SK-MEL-5 (cell line): ENCODE measurements at regions of chr14 and their contacts with region 1.

Region 1: DNA sequence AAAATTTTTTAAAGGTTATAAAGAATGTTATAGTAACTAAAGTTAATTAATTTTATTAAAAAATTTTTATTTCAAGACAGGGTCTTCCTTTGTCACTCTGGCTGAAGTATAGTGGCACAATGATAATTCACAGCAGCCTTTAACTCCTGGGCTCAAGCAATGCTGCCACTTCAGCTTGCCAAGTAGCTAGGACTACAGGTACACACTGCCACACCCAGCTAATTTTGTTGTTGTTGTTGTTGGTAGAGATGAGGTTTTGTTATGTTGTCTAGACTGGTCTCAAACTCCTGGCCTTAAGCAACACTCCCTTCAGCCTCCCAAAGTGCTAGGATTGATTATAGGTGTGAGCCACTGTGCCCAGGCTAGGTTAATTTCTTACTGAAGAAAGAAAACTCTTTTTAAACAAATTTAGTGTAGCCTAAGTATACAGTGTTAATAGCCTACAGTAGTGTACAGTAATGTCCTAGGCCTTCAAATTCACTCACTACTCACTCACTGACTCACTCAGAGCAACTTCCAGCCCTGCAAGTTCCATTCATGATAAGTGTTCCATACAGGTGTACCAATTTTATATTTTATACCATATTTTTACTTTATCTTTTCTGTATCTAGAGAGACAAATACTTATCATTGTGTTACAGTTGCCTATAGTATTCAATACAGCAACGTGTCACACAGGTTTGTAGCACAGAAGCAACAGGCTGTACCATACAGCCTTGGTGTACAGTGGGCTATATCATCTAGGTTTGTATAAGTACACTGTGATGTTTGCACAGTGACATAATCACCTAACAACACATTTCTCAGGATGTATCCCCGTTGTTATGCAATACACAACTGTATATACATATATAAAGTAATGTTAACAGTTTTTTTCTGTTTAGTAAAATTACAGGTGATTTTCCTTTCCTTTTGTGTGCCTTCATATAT is 24.7 kb upstream of the DNAAF2 start:
- DNase-seq: no peak

Region 2: DNA sequence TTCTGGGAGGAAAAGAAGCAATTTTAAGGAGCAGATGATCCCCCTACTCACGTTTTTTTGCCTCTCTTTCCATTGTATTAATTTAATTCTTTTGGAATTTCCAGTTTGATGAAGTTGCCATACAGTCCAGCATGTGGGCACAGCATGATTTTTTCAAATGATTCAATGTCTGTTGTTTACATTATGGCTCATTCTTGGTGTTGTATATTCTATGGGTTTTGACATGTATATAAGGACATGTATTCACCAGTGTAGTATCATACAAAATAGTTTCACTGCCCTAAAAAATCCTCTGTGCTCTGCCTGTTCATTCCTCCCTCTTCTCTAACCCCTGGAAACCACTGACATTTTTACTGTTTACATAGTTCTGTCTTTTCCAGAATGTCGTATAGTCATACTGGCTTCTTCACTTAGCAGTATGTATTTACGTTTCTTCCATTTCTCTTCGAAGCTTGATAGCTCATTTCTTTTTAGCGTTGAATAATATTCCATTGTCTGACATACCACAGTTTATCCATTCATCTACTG is 94.8 kb after region 1 on chr14:
- in situ Hi-C with region 1: loop called (anchors 10 kb)
- DNase-seq: no peak

Region 3: DNA sequence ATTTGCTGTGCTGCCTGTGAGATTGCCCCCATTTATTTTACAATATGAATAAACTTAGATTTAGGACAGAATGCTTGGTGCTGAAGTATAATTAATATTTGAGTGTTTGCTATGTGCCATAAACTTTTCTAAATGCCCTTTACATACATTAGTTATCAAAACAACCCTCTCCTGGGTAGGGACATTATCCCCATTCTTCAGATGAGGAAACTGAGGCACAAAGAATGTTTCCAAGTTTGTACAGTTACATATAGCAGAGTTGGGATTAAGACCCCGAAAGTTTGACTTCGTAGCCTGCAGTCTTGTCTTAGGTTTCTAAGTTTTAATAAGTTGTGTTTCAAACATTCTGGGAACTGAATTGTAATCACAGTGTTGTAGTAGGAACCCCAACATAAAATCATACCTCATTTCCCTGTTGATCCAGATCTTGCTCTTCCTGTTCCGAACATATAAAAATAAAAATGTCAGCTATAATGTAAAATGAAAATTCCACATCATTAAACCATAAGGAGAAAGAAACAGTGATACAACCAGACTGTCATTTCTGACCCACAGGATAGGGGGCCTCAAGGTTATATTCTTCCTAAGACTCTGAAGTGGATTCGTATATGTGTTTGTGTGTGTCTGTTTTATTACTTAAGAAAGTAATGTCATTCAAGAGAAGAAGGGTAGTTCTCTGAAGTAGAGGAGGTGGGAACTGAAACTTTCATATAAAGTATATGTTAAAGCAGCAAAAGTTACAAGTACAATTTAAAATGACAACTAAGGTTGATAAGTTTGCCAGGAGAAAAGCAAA is 126.7 kb after region 1 on chr14:
- in situ Hi-C with region 1: no loop called
- DNase-seq: no peak

Region 4: GRCh38 chr14:49934646-49935045 is 274.9 kb after region 1 on chr14:
- in situ Hi-C with region 1: no loop called
- DNase-seq: no peak